Esophagus squamous epithelium (tissue), 5 donors: ENCODE measurements at regions of chr17 and their contacts with region 1.

Region 1: GRCh38 chr17:35537601-35538141 is at the start of gene SLFN12L:
- DNase-seq: no peak
- H3K4me3 ChIP-seq: peak within 1 kb of the TSS in 3 of 4 donors; percentile 15 to 31 (median 27)
- H3K27ac ChIP-seq: peak within 1 kb of the TSS; percentile 30 to 70 (median 56)
- H3K4me1 ChIP-seq: peaks cover 0 to 44% (median 12%) of the 10 kb centered on the region in 3 donors
- H3K27me3 ChIP-seq: no peaks in the 10 kb centered on the region
- CTCF ChIP-seq: no peak
- POLR2A ChIP-seq: no peak
- total RNA-seq, gene SLFN12L: 0.50 to 3.4 (median 1.2) TPM

Region 2: DNA sequence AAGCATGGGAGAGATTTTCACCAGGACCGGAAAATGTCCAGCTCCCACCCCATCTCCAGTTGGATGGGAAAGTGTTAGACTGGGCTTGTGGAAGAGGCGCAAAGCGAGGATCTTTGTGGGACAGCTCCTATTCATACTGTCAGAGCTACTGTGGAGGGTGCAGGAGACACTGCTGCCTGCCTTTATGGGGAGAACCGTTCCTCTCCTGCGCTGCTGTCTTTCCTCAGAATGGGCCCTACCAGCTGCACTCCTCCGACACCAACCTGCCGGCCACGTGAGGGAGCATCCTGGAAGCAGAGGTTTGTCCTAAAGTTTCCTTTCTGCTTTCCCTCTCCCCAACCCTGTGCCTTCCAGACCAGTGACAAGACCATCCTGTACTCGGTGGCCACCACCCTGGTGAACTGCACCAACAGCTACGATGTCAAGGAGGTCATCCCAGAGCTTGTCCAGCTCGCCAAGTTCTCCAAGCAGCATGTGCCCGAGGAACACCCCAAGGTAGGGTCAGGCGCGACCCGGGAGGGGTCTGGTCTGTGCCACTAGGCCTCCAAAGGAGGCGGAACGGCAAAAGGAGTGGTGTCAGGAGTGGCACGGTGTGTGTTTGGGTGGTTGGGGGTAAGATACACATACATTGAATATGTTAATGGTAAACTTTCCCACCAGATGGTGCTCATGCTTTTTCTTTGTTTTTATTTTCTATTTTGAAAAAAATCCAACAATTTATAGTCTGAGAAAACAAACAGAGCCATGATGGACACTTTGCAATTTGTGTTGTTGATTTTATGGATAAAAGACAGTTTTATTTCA is 366.5 kb before region 1 on chr17:
- intact Hi-C with region 1: loop called (anchors 10 kb)
- DNase-seq: no peak
- H3K4me3 ChIP-seq: no peak overlapping the region
- H3K27ac ChIP-seq: no peak overlapping the region
- H3K4me1 ChIP-seq: peaks cover 0 to 7% (median 0%) of the 10 kb centered on the region in 3 donors
- H3K27me3 ChIP-seq: peaks cover 0 to 8% (median 0%) of the 10 kb centered on the region in 4 donors
- CTCF ChIP-seq: peak in 5 of 6 experiments; percentile 16 to 51 (median 42)
- POLR2A ChIP-seq: no peak

Region 3: DNA sequence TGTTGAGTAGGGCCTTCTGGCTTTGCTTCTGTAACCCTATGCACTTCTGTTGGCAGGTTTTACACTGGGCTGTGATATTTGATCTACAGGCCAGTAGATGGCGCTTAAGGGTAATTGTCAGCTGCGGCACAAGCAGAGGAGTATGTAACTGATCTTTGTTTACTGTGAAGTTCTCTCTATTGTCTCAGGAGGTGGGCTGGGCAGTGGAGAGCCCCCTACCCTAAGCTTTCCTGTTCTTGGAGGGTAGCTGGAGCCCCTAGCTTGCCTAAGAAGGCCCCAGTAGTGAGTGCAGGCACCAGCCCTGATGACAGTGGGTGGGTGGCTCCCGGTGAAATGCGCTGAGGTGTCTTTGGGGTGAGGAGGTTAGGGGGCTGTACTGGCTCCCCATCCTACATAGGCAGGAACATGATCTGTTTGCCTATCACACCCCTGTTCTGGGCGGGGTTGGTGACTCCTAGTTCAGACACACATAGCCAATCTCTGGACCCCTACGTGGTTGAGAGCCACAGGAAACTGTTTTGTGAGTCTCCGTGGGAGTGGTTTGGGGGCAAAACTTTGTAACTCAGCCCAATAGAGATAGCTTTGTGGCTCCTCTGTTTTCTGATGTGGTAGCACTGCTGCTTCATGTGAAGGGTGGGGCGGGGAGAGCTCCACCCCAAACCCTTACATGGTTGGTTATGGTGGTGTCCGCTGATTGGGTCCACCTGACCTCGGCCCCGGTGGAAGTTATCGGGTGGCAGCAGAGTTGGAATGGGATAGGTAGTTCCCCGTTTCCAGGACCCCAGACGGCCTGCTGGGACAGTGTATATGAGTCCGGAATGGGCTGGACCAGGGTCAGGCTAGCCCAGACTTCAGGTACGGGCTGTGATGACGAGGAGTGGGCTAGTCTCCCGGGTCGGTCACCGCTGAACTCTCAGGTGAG is 224.6 kb before region 1 on chr17:
- intact Hi-C with region 1: loop called (anchors 5 kb)
- DNase-seq: no peak
- H3K4me3 ChIP-seq: peak overlapping the region; percentile 1 to 58 (median 36)
- H3K27ac ChIP-seq: peak overlapping the region; percentile 8 to 87 (median 80)
- H3K4me1 ChIP-seq: peaks cover 18 to 35% (median 26%) of the 10 kb centered on the region in 3 donors
- H3K27me3 ChIP-seq: no peaks in the 10 kb centered on the region
- CTCF ChIP-seq: peak; percentile 68 to 85 (median 78)
- POLR2A ChIP-seq: peak in 2 of 4 donors; percentile 4 to 39